A549 (cell line): ENCODE measurements at regions of chr20 and their contacts with region 1.

Region 1: GRCh38 chr20:10357974-10358373 is 76.0 kb downstream of the MKKS start:
- DNase-seq: peak in 1 of 2 experiments; percentile 29
- ATAC-seq: no peak
- H3K4me3 ChIP-seq: no peak overlapping the region
- H3K27ac ChIP-seq: peak overlapping the region; percentile 92 to 93
- H3K4me1 ChIP-seq: peaks cover 36% of the 10 kb centered on the region
- CTCF ChIP-seq: peak; percentile 22; the same call in 1 of the 3 replicates
- EP300 ChIP-seq: no peak
- POLR2A ChIP-seq: no peak
- RAD21 ChIP-seq: peak; percentile 30 to 50; a peak in 2 of 5 replicates

Region 2: GRCh38 chr20:10219452-10219791 is 138.6 kb before region 1 on chr20:
- CTCF ChIA-PET with region 1: interaction called, 8 read pairs
- POLR2A ChIA-PET with region 1: interaction called, 13 read pairs
- DNase-seq: peak; percentile 56 to 74
- ATAC-seq: peak; percentile 62 to 74
- H3K4me3 ChIP-seq: peak overlapping the region; percentile 70
- H3K27ac ChIP-seq: peak overlapping the region; percentile 77 to 93
- H3K4me1 ChIP-seq: peaks cover 63% of the 10 kb centered on the region
- CTCF ChIP-seq: no peak
- EP300 ChIP-seq: no peak
- POLR2A ChIP-seq: peak; percentile 14; the same call in 1 of the 2 replicates
- RAD21 ChIP-seq: peak; percentile 22 to 56; a peak in 4 of 5 replicates

Region 3: DNA sequence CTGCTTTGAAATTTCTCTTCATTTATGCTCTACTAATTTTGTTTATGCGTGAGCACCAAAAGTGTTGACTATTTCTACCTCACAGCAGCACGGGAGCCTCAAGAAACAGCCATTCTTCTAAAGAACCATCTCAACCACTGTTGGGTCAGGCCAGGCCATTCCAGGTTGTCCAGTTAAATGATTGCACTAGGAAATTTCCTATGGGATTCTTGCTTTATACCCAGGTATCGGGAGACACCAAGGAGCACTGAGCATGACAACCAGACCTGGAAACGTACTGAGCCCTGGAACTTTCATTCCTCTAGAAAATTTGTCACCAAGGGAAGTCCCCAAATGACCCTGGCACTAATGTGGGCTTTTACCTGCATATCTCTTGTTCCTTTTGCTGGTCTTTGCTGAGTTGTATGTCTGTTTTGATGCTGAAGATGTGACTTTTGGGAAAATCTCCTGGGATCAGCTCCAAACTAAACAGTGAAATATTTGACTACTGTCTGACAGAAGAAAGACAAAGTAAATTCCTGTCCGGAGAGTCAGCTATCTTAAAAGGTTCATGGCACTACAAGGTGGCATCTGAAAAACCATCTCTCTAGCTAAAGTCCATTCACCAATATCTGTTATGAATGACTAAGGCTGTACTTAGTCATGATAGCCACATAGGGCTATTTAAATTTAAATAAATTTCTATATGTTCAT is 68.9 kb before region 1 on chr20:
- CTCF ChIA-PET with region 1: no interaction called
- POLR2A ChIA-PET with region 1: interaction called, 11 read pairs
- DNase-seq: peak in 1 of 2 experiments; percentile 89
- ATAC-seq: peak; percentile 90 to 94
- H3K4me3 ChIP-seq: no peak overlapping the region
- H3K27ac ChIP-seq: peak overlapping the region; percentile 86 to 90
- H3K4me1 ChIP-seq: peaks cover 48% of the 10 kb centered on the region
- CTCF ChIP-seq: no peak
- EP300 ChIP-seq: peak; percentile 97
- POLR2A ChIP-seq: no peak
- RAD21 ChIP-seq: peak; percentile 42 to 67

Region 4: GRCh38 chr20:10369723-10370090 is 11.7 kb after region 1 on chr20:
- CTCF ChIA-PET with region 1: interaction called, 7 read pairs
- POLR2A ChIA-PET with region 1: interaction called, 61 read pairs
- DNase-seq: peak; percentile 82 to 95
- ATAC-seq: peak; percentile 90 to 95
- H3K4me3 ChIP-seq: no peak overlapping the region
- H3K27ac ChIP-seq: peak overlapping the region; percentile 90 to 93
- H3K4me1 ChIP-seq: peaks cover 55% of the 10 kb centered on the region
- CTCF ChIP-seq: no peak
- EP300 ChIP-seq: peak; percentile 83 to 90; a peak in 4 of 5 replicates
- POLR2A ChIP-seq: no peak
- RAD21 ChIP-seq: peak; percentile 6 to 52; a peak in 2 of 5 replicates

Region 5: GRCh38 chr20:10434832-10435812 is 77.1 kb after region 1 on chr20 and contains the start of gene SLX4IP:
- CTCF ChIA-PET with region 1: interaction called, 6 read pairs
- POLR2A ChIA-PET with region 1: interaction called, 39 read pairs
- DNase-seq: peak; percentile 90 to 99
- ATAC-seq: peak; percentile 75 to 83
- H3K4me3 ChIP-seq: peak within 1 kb of the TSS; percentile 75
- H3K27ac ChIP-seq: peak within 1 kb of the TSS; percentile 90 to 96
- H3K4me1 ChIP-seq: peaks cover 48% of the 10 kb centered on the region
- CTCF ChIP-seq: no peak
- EP300 ChIP-seq: no peak
- POLR2A ChIP-seq: peak; percentile 73
- RAD21 ChIP-seq: peak in 1 of 2 experiments; percentile 27; a peak in 1 of 5 replicates
- polyA plus RNA-seq, gene SLX4IP: 7.5 and 8.0 TPM in 2 replicates

Region 6: DNA sequence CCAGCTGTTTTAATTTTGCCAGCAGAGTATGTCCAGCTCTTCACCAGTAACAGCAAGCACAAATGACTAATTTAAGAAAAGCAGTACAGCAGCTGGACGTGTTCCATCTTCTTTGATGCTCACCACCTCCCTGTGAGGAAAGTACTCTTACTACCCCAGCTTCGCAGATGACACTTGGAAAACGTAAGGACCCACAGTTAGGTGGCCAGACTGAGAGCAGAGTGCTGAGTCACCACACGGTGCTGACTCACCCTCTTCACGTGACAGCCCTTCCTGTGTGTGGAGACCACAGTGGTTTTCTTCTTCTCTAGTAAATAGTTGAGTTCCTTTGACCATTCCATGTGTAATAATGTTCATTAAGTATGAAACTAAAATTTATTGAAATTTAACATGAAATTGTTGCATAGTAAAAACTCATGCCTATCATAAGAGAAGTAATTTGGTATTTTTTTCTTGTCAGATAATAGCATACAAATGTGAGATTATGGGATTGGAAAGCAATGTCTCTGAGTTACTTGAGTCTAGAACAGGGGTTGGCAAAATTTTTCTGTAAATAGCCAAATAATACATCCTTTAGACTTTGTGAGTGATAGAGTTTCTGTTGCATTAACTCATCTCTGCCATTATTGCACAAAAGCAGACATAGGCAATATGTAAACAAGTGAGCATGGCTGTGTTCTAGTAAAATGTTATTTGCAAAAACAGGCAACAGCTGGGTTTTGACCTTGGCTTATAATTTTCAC is 153.7 kb after region 1 on chr20:
- CTCF ChIA-PET with region 1: no interaction called
- POLR2A ChIA-PET with region 1: no interaction called
- DNase-seq: peak; percentile 94 to 95
- ATAC-seq: peak; percentile 95 to 97
- H3K4me3 ChIP-seq: no peak overlapping the region
- H3K27ac ChIP-seq: peak overlapping the region; percentile 88 to 89
- H3K4me1 ChIP-seq: peaks cover 66% of the 10 kb centered on the region
- CTCF ChIP-seq: no peak
- EP300 ChIP-seq: peak; percentile 33 to 54; a peak in 2 of 5 replicates
- POLR2A ChIP-seq: no peak
- RAD21 ChIP-seq: 0 out of 5 replicates have a peak, but pooled peaks of 1 of the 2 experiments have one; percentile 32